HCT116 (cell line): ENCODE measurements at regions of chr9 and their contacts with region 1.

Region 1: GRCh38 chr9:7186175-7186574 is 428.4 kb downstream of the KDM4C start:
- DNase-seq: peak; percentile 12
- ATAC-seq: peak; percentile 64
- H3K4me3 ChIP-seq: no peak overlapping the region
- H3K27ac ChIP-seq: 0 out of 2 replicates have a peak overlapping the region, but pooled peaks have one; percentile 5
- H3K4me1 ChIP-seq: peaks cover 8 to 16% of the 10 kb centered on the region in 2 experiments
- H3K27me3 ChIP-seq: no peaks in the 10 kb centered on the region
- CTCF ChIP-seq: peak; percentile 49 to 81 (median 70); a peak in 5 of 6 replicates
- POLR2A ChIP-seq: no peak
- RAD21 ChIP-seq: peak; percentile 66

Region 2: DNA sequence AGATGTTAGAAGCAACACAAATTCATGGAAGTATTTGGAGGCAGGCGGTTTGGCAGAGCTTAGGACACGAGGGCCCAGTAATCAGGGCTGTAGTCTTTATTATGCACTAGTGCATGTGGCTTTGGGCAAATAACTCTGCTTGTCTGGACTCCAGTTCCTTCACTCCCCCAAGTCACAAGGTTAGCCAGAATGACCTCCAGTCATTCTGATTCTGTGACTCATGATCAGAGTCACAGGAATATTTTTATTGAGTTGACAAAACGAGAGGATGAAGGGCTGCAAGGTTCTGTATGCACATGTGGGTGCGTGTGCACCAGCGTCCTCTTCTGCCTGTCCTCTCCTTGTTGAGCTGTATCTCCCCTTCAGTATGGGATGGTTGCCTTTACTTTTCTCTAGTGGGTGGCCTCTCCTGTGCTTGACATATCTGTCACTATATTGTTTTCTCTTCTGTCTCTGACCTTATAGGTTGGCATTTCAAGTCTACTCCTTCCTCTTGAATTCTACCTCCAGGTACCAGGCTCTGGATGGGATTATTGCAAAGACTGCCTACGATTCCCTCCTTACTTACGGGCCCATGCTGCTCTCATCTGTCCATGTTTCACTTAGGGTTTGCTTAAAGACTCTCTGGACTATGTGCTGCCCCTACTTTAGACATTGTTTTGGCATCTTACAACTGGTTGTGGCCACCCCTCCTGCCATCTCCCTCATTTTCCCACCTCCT is 333.8 kb before region 1 on chr9:
- CTCF ChIA-PET with region 1: no interaction called
- POLR2A ChIA-PET with region 1: no interaction called
- RAD21 ChIA-PET with region 1: no interaction called
- intact Hi-C with region 1: no loop called
- DNase-seq: no peak
- ATAC-seq: peak; percentile 38; the same call in 1 of the 2 replicates
- H3K4me3 ChIP-seq: no peak overlapping the region
- H3K27ac ChIP-seq: no peak overlapping the region
- H3K4me1 ChIP-seq: peaks cover 5 to 8% of the 10 kb centered on the region in 2 experiments; a peak in 3 of 4 replicates
- H3K27me3 ChIP-seq: no peaks in the 10 kb centered on the region
- CTCF ChIP-seq: no peak
- POLR2A ChIP-seq: no peak
- RAD21 ChIP-seq: no peak

Region 3: GRCh38 chr9:7042124-7042523 is 144.1 kb before region 1 on chr9:
- CTCF ChIA-PET with region 1: no interaction called
- POLR2A ChIA-PET with region 1: no interaction called
- RAD21 ChIA-PET with region 1: no interaction called
- intact Hi-C with region 1: no loop called
- DNase-seq: no peak
- ATAC-seq: no peak
- H3K4me3 ChIP-seq: no peak overlapping the region
- H3K27ac ChIP-seq: no peak overlapping the region
- H3K4me1 ChIP-seq: no peaks in the 10 kb centered on the region
- H3K27me3 ChIP-seq: no peaks in the 10 kb centered on the region
- CTCF ChIP-seq: no peak
- POLR2A ChIP-seq: no peak
- RAD21 ChIP-seq: no peak

Region 4: DNA sequence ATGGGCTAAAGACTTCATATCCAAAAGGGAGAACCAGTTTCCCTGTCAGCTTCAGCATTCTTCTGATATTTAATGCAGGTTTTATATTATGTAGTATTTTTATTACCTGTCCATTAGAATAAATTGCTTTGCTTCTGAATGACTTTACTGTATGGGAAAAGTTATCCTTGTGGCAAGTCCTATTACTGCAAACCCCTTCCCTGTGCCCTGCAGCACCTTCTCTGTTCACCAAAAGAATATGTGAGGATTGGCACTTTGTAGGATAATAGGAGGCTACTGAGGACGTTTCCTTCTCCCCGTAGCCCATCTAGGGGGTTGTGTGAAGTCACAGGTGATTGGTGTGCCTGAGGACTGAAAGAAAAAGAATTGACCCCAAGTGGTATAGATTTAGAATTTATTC is 132.3 kb before region 1 on chr9:
- CTCF ChIA-PET with region 1: interaction called, 4 read pairs
- POLR2A ChIA-PET with region 1: no interaction called
- RAD21 ChIA-PET with region 1: interaction called, 5 to 7 read pairs
- intact Hi-C with region 1: loop called (anchors 1 kb)
- DNase-seq: no peak
- ATAC-seq: no peak
- H3K4me3 ChIP-seq: no peak overlapping the region
- H3K27ac ChIP-seq: no peak overlapping the region
- H3K4me1 ChIP-seq: no peaks in the 10 kb centered on the region
- H3K27me3 ChIP-seq: no peaks in the 10 kb centered on the region
- CTCF ChIP-seq: no peak
- POLR2A ChIP-seq: no peak
- RAD21 ChIP-seq: no peak